ENCODE measurements at regions of chr7 and their contacts with region 1.

Region 1: DNA sequence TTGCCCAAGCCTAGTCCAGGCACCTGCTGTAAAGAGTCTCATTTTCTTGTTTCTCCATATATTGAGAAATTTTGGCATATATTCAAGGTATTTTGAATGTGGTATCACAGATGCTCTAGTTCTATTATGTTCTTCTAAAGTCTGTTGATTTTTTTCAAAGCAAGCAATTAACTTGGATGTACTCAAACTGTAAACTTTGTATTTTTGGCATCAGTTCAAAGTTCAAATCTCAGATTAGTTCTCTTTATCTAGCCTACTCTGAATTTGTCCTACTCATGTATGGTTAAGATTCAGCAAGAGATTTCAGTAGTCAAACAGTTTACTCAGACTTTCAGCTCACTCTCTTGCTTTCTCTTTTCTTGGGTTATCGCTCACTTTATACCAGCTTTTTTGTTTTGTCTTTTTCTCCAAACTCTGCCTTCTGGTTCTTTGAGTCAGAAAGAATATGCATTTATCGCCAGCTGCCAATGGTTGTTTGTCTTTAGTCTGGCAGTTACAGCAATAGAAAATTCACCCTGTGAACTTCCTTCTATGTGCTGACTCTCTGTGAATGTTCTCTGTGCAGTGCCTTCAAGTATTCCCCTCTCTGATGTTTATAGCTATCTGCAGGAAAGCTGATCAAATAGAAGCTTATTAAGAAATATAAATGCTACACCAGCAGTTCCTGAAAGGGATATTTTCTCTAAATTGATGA is 56.0 kb downstream of the ANKRD7 start:
- DNase-seq: no peak
- H3K4me3 ChIP-seq: no peak overlapping the region
- H3K27ac ChIP-seq: peak overlapping the region; percentile 19 to 62 (median 61)
- H3K4me1 ChIP-seq: peaks cover 0 to 21% (median 4%) of the 10 kb centered on the region in 4 donors
- H3K27me3 ChIP-seq: no peaks in the 10 kb centered on the region
- CTCF ChIP-seq: no peak
- EP300 ChIP-seq: no peak
- POLR2A ChIP-seq: no peak

Region 2: DNA sequence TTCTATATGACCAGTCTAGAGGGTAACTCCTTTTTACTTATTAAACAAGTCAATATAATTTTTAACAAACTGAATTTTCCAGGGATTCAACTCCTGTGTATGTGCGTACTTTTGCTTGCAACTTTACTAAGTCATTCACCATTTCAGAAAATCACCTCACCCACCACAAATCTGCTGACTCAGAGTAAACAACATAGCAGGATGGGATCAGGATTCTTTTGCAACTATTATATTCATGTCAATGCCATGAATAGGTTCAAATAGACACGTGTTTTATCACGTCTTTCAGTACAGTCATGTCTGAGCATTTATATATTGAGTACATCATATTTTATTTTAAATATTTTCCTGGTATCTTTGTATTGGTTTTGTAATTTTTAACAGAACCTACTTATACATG is 421.7 kb before region 1 on chr7:
- in situ Hi-C with region 1: no loop called
- intact Hi-C with region 1: no loop called
- DNase-seq: no peak
- H3K4me3 ChIP-seq: no peak overlapping the region
- H3K27ac ChIP-seq: no peak overlapping the region
- H3K4me1 ChIP-seq: peaks cover 0 to under 1% (median 0%) of the 10 kb centered on the region in 4 donors
- H3K27me3 ChIP-seq: no peaks in the 10 kb centered on the region
- CTCF ChIP-seq: no peak
- EP300 ChIP-seq: no peak
- POLR2A ChIP-seq: no peak

Region 3: DNA sequence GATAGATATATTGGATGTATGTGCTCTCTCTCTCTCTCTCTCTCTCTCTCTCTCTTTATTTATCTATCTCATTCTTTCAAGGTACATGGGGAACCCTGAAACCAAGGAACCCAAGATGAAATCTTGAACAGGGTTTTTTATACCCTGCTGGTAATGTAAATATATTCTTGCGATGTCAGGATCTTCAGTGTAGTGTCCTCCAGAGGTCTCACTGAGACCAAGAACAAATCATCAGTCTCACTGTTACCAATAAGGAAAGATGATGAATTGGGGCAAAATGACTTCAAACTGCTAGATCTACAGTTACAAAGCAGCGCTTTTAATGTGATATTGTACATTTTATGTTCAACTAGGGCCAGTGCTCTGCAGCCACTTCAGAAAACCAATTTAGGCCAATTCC is 367.5 kb after region 1 on chr7:
- in situ Hi-C with region 1: no loop called
- intact Hi-C with region 1: no loop called
- DNase-seq: no peak
- H3K4me3 ChIP-seq: no peak overlapping the region
- H3K27ac ChIP-seq: no peak overlapping the region
- H3K4me1 ChIP-seq: no peaks in the 10 kb centered on the region
- H3K27me3 ChIP-seq: no peaks in the 10 kb centered on the region
- CTCF ChIP-seq: no peak
- EP300 ChIP-seq: no peak
- POLR2A ChIP-seq: no peak

Region 4: DNA sequence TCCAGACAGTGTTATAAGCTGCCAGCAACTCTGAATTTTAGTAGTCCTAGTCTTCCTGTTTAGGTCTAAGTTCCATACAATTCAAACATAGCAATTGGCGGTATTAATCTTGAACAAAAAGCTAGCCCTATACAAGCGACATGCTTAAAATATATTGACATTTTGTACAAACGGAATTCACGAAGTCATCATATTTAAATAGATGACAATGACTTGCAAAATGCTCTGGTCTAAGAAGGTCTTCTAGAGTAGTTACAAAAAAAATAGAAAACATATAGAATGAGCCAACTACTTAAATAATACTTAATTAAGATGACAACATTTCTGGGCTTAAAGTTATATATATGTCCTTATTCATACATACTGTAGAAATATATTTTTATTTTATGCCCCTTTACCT is 390.7 kb after region 1 on chr7:
- in situ Hi-C with region 1: no loop called
- intact Hi-C with region 1: no loop called
- DNase-seq: no peak
- H3K4me3 ChIP-seq: no peak overlapping the region
- H3K27ac ChIP-seq: no peak overlapping the region
- H3K4me1 ChIP-seq: no peaks in the 10 kb centered on the region
- H3K27me3 ChIP-seq: no peaks in the 10 kb centered on the region
- CTCF ChIP-seq: no peak
- EP300 ChIP-seq: no peak
- POLR2A ChIP-seq: no peak

Region 5: GRCh38 chr7:118863966-118864365 is 583.5 kb after region 1 on chr7:
- in situ Hi-C with region 1: no loop called
- intact Hi-C with region 1: loop called (anchors 5 kb)
- DNase-seq: no peak
- H3K4me3 ChIP-seq: no peak overlapping the region
- H3K27ac ChIP-seq: no peak overlapping the region
- H3K4me1 ChIP-seq: no peaks in the 10 kb centered on the region
- H3K27me3 ChIP-seq: no peaks in the 10 kb centered on the region
- CTCF ChIP-seq: no peak
- EP300 ChIP-seq: no peak
- POLR2A ChIP-seq: no peak

Measured in transverse colon (tissue), 4 donors.